Activated T-helper 2 cell treated with anti-CD3 and anti-CD28 coated beads, Interferon-gamma antibody, Interleukin-2, Interleukin-4, amounts not matched to agents 10 μg/mL and 5 μg/mL and 100 μg/mL, durations not matched to agents 14 hours and 24 hours and 36 hours (primary cell): ENCODE measurements at regions of chr5 and their contacts with region 1.

Region 1: GRCh38 chr5:96344678-96345577 is 88.1 kb downstream of the PCSK1 start:
- DNase-seq: no peak
- H3K4me3 Mint-ChIP-seq: peak overlapping the region; percentile 2
- H3K27ac Mint-ChIP-seq: no peak overlapping the region
- H3K4me1 Mint-ChIP-seq: peaks cover 22% of the 10 kb centered on the region
- H3K27me3 Mint-ChIP-seq: peaks cover 42% of the 10 kb centered on the region

Region 2: DNA sequence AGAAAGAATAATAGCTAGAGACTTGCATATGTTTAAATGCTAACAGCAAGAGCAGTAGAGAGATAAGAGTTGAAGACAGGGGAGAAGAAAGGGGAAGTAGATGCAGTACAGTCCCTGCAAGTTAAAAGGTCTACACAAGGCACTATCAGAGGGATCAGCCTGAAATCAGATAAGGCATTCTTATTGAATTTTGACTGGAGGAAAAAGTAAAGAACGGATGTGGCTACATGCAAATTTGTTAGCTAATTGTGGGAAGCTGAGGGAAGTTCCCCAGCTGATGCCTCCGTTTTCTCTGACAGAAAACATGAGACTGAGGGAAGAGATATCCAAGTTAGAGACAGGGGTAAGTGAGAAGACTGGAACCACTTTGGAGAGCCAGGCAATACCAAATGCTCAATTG is 626.7 kb before region 1 on chr5:
- intact Hi-C with region 1: loop called (anchors 5 kb)
- DNase-seq: peak; percentile 21
- H3K4me3 Mint-ChIP-seq: no peak overlapping the region
- H3K27ac Mint-ChIP-seq: no peak overlapping the region
- H3K4me1 Mint-ChIP-seq: peaks cover 19% of the 10 kb centered on the region
- H3K27me3 Mint-ChIP-seq: peaks cover 31% of the 10 kb centered on the region

Region 3: DNA sequence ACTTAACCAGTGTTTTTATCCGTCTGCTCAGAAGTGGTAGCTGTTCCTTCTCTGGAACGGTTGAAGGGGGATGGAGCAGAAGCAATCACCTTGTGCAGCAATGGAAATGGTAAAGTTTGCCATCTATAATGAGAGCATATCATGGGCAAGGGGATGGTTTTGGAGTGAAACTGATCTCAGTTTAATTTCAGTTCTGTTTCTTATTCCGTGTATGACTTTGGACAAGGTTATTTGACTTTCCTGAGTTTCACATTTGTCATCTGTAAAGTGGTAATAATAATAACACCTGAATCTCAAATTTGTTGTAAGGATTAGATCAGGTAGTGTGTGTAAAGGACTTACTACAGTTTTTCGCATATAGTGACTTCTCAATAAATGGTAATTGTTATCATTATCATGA is 18.0 kb before region 1 on chr5:
- intact Hi-C with region 1: no loop called
- DNase-seq: no peak
- H3K4me3 Mint-ChIP-seq: no peak overlapping the region
- H3K27ac Mint-ChIP-seq: no peak overlapping the region
- H3K4me1 Mint-ChIP-seq: peaks cover 4% of the 10 kb centered on the region
- H3K27me3 Mint-ChIP-seq: peaks cover 38% of the 10 kb centered on the region

Region 4: DNA sequence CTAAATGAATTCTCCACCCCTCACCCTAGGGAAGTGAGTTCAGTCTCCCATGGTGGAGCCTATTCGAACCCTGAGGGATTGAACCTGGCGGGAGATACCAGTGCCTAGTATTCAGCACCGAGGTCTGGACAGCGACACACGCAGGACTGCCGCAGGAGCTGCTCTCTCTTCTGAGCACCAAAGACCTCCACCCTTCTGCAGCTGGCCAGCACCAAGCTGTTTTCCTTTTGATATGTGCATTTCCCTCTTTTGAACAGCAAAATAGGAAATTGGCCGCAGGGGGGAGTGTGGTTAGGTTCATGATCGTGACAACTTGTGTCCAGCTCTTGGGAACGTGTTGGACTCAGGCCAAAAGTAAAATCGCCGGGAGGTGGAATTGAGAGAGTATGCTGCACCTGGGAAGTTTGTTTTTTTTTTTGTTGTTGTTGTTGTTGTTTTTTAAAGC is 89.3 kb after region 1 on chr5:
- intact Hi-C with region 1: loop called (anchors 10 kb)
- DNase-seq: peak; percentile 14
- H3K4me3 Mint-ChIP-seq: no peak overlapping the region
- H3K27ac Mint-ChIP-seq: no peak overlapping the region
- H3K4me1 Mint-ChIP-seq: peaks cover 9% of the 10 kb centered on the region
- H3K27me3 Mint-ChIP-seq: peaks cover 60% of the 10 kb centered on the region

Region 5: GRCh38 chr5:96601811-96602244 is 256.9 kb after region 1 on chr5:
- intact Hi-C with region 1: loop called (anchors 1 kb)
- DNase-seq: peak; percentile 26
- H3K4me3 Mint-ChIP-seq: no peak overlapping the region
- H3K27ac Mint-ChIP-seq: no peak overlapping the region
- H3K4me1 Mint-ChIP-seq: peaks cover 12% of the 10 kb centered on the region
- H3K27me3 Mint-ChIP-seq: peaks cover 32% of the 10 kb centered on the region

Region 6: DNA sequence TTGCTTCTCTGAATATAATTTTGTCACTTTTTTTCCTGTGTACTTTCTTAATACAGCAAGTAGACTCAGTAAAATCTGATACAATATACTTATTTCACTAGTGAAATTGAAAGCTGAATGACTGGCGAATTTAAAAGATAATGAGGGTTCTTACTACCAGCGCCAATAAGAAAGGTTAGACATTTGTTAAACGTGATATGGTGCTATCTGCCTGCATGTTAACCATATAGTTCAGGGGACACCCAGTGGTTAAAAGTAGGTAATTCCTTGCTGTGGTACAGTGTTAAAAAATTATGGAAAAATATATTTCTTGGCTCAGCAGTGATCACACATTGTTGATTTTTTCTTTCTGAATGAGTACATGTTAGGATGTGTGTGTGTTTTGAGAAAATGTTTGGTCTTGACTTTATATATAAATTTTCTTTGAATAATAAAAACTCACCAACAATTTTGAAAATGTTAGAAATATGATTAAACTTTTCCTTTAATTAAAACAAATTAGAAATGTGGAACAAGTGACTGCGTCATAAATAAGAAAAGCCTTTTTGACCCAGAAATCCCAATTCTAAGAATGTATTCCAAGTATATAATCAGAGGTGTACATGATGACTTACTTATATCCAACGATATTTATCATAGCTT is 343.0 kb after region 1 on chr5:
- intact Hi-C with region 1: loop called (anchors 2 kb)
- DNase-seq: no peak
- H3K4me3 Mint-ChIP-seq: no peak overlapping the region
- H3K27ac Mint-ChIP-seq: no peak overlapping the region
- H3K4me1 Mint-ChIP-seq: peaks cover 5% of the 10 kb centered on the region
- H3K27me3 Mint-ChIP-seq: no peaks in the 10 kb centered on the region